ENCODE measurements at regions of chr1 and their contacts with region 1.

Region 1: DNA sequence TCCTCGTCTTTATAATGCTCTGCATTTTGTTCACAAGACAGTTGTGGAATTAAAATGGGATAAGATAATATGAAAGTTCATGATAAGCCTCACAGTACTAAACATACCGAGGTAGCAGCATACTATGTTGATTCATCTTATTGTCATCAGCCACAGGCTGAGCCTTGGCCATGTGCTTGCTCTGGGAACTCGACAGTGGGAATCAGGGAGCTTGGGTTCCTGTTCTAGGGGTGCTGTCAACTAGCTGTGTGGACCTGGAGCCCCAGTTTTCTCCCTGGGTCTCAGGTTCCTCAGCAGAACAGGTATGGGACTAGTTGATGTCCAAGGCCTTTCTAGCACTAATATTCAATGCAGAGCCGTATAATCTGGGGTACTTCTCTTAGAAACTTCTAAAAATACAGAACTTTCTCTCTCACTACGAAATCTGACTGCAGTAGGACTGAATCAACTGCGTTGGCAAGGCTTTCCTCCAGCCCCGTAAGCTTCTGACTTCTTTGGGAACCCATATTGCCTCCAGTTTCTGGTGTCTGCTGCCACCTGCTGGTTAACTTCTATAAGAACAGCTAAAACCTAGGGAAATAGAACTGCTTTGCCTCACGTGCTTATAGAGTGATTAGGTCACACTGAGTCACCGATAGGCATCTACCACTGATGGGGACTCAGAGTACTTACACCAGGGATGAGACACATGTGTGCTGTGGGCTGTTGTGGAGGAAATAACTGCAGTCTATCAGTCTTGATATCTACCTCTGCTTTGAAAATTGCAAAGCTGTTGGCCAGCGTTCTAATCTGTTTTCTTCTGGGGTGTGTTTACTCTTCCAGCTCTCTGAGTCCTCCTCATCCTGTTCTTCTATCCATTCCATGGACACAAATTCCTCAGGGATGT is 110.9 kb downstream of the RGL1 start:
- DNase-seq: peak; percentile 79
- ATAC-seq: peak; percentile 99
- H3K4me3 Mint-ChIP-seq: no peak overlapping the region
- H3K27ac Mint-ChIP-seq: no peak overlapping the region
- H3K4me1 Mint-ChIP-seq: peaks cover 24% of the 10 kb centered on the region
- H3K27me3 Mint-ChIP-seq: no peaks in the 10 kb centered on the region
- CTCF ChIP-seq: peak; percentile 80

Region 2: GRCh38 chr1:183896466-183897048 is 19.3 kb before region 1 on chr1:
- CTCF ChIA-PET with region 1: interaction called, 26 read pairs
- POLR2A ChIA-PET with region 1: interaction called, 4 read pairs
- intact Hi-C with region 1: no loop called
- DNase-seq: no peak
- ATAC-seq: peak; percentile 42
- H3K4me3 Mint-ChIP-seq: no peak overlapping the region
- H3K27ac Mint-ChIP-seq: no peak overlapping the region
- H3K4me1 Mint-ChIP-seq: peaks cover 13% of the 10 kb centered on the region
- H3K27me3 Mint-ChIP-seq: no peaks in the 10 kb centered on the region
- CTCF ChIP-seq: no peak

Region 3: DNA sequence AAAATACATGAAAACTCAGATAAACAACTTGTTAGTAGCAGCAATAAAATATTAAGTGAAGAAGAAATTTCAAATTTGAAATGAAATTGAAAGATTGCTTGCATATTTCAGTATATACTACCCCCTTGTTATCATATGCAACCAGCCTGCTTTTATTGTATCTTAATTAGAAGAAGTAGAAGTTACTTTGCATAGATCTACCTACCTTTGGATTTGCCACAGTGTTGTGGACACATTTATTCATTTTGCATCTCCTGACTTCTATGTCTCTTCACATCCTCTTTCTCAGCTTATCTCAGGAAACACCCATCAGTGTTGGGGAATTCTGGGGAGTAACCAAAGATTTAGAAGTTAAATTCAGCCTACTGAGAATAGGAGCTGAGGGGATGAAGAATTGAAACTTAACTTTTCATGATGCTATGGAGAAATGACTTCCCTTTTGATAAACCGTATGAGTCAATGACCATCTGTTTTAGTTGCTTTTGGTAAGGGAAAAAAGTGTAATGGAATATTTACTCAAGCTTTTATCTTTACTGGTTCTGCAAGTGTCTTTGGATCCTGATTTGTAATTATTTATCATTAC is 14.0 kb before region 1 on chr1:
- CTCF ChIA-PET with region 1: interaction called, 26 read pairs
- POLR2A ChIA-PET with region 1: no interaction called
- intact Hi-C with region 1: no loop called
- DNase-seq: no peak
- ATAC-seq: peak; percentile 7
- H3K4me3 Mint-ChIP-seq: no peak overlapping the region
- H3K27ac Mint-ChIP-seq: peak overlapping the region; percentile 54
- H3K4me1 Mint-ChIP-seq: peaks cover 10% of the 10 kb centered on the region
- H3K27me3 Mint-ChIP-seq: no peaks in the 10 kb centered on the region
- CTCF ChIP-seq: no peak

Region 4: GRCh38 chr1:183983371-183984105 is 67.7 kb after region 1 on chr1:
- CTCF ChIA-PET with region 1: no interaction called
- POLR2A ChIA-PET with region 1: no interaction called
- intact Hi-C with region 1: no loop called
- DNase-seq: no peak
- ATAC-seq: no peak
- H3K4me3 Mint-ChIP-seq: no peak overlapping the region
- H3K27ac Mint-ChIP-seq: no peak overlapping the region
- H3K4me1 Mint-ChIP-seq: peaks cover 2% of the 10 kb centered on the region
- H3K27me3 Mint-ChIP-seq: peaks cover 1% of the 10 kb centered on the region
- CTCF ChIP-seq: no peak

Measured in activated CD8-positive, alpha-beta T cell treated with anti-CD3 and anti-CD28 coated beads for 36 hours (primary cell).